Panc1 (cell line): ENCODE measurements at regions of chr13 and their contacts with region 1.

Region 1: DNA sequence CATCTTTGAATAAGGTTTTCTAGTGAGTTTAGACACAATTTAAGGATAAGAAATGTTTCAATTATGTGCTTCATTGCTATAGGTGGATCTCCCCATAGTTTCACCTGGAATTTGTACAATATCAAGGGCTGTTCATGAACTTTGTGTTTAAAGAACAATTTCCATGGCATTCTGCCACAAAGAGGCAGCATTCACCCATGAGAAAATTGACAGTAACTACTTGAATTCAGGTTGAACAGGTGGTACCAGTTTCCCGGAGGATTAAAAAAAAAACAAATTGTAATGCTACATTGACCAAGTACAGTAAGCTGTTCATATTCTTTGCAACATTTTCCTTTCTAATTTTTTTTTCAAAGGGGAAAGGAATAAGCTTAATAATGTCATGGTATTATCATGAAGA is 9.1 kb downstream of the SLITRK5 start:
- DNase-seq: no peak
- ATAC-seq: no peak
- H3K4me3 ChIP-seq: no peak overlapping the region
- H3K27ac ChIP-seq: no peak overlapping the region
- H3K4me1 ChIP-seq: peaks cover 7% of the 10 kb centered on the region; the same call in 1 of the 2 replicates
- H3K27me3 ChIP-seq: no peaks in the 10 kb centered on the region
- CTCF ChIP-seq: peak; percentile 28; the same call in 1 of the 2 replicates

Region 2: GRCh38 chr13:87754097-87754496 is 73.8 kb after region 1 on chr13:
- CTCF ChIA-PET with region 1: no interaction called
- POLR2A ChIA-PET with region 1: no interaction called
- in situ Hi-C with region 1: no loop called
- intact Hi-C with region 1: loop called (anchors 10 kb)
- DNase-seq: no peak
- ATAC-seq: no peak
- H3K4me3 ChIP-seq: no peak overlapping the region
- H3K27ac ChIP-seq: no peak overlapping the region
- H3K4me1 ChIP-seq: no peaks in the 10 kb centered on the region
- H3K27me3 ChIP-seq: no peaks in the 10 kb centered on the region
- CTCF ChIP-seq: no peak